Transverse colon (tissue), 4 donors: ENCODE measurements at regions of chr21 and their contacts with region 1.

Region 1: DNA sequence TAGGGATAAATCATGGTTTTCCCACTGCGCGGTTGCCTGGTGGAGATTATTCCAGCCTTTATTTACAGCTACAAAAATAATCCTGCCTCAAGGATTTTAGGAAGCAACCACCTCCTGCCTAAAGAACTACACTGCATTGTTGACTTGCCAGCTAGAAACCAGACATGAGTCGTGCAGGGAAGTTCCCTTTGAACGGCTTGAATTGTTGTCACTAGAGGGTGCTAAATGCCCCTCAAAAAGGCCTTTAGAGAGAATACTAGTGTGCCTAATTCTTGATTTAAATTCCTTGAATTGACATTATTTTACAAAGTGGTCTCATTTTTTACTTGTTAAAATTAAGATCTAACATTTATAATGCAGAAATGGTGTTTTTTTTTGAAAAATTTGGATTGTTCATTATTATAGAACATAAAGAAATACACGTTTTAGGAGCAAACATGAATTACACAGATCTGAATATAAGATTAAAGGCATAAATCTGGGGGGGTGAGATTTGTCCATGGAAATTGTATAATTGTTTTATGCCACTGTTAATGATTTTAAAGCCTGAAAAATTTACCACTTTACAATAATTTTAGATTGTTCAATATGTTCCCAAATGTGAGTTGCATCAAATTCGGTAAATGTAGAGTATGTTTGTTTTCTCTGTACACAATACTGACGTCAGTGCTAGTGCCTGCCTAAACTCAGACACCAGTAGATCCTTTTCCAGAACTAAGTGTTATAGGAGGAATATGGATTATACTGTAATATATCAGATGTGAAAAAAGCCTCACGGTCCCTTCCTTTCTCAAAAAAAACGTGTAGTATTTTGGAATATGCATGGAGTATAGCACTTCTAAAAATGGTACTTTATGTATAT is 7.6 kb upstream of the ERG start:
- DNase-seq: no peak
- H3K4me3 ChIP-seq: no peak overlapping the region
- H3K27ac ChIP-seq: peak overlapping the region in 3 of 4 donors; percentile 39 to 71 (median 53)
- H3K4me1 ChIP-seq: peaks cover 3 to 18% (median 17%) of the 10 kb centered on the region in 4 donors
- H3K27me3 ChIP-seq: no peaks in the 10 kb centered on the region
- CTCF ChIP-seq: peak; percentile 47 to 65 (median 62)
- EP300 ChIP-seq: no peak
- POLR2A ChIP-seq: no peak

Region 2: DNA sequence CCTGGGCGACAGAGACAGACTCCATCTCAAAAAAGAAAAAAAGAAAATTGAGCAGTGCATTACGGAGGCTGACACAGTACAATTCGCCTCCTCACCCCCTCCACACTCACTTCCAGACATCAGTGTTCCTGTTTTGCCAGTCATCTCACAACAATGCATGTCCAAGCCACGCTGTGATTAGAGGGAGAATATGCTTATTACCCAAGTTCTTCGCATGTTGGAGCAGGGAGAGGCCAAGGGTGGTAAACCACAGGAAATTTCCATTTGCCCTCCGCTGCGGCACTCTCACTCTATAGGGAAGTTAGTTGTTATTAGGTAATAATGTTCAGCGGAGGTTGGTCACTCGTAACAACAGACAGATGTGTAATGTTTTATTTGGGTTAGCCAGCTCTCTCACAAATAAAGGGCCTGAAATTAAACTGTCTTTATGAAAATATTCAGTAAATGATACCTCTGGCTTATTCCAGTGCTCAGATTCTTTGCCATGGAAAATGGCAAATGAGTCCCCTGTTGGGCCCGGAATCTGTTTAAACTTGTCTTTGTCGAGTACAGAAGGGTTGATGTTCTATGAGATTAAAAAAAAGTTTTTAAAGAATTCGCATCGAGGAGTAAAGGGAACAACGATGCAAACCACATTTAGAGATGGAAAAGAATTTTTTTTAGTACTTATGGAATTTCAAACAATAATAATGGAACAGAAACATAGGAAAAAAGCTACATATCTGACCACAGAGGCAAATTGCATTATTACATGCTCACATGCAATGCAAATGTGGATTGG is 216.0 kb before region 1 on chr21:
- in situ Hi-C with region 1: no loop called
- intact Hi-C with region 1: no loop called
- DNase-seq: peak; percentile 16
- H3K4me3 ChIP-seq: no peak overlapping the region
- H3K27ac ChIP-seq: no peak overlapping the region
- H3K4me1 ChIP-seq: peaks cover 0 to 15% (median 4%) of the 10 kb centered on the region in 4 donors
- H3K27me3 ChIP-seq: no peaks in the 10 kb centered on the region
- CTCF ChIP-seq: no peak
- EP300 ChIP-seq: no peak
- POLR2A ChIP-seq: no peak

Region 3: GRCh38 chr21:38570596-38570995 is 64.7 kb after region 1 on chr21:
- in situ Hi-C with region 1: no loop called
- intact Hi-C with region 1: loop called (anchors 2 kb)
- DNase-seq: no peak
- H3K4me3 ChIP-seq: no peak overlapping the region
- H3K27ac ChIP-seq: no peak overlapping the region
- H3K4me1 ChIP-seq: no peaks in the 10 kb centered on the region
- H3K27me3 ChIP-seq: peaks cover 6% of the 10 kb centered on the region
- CTCF ChIP-seq: no peak
- EP300 ChIP-seq: no peak
- POLR2A ChIP-seq: no peak

Region 4: GRCh38 chr21:38712071-38712470 is 206.2 kb after region 1 on chr21:
- in situ Hi-C with region 1: loop called in 3 of 4 experiments (anchors 10 to 25 kb)
- intact Hi-C with region 1: no loop called
- DNase-seq: peak; percentile 44
- H3K4me3 ChIP-seq: no peak overlapping the region
- H3K27ac ChIP-seq: no peak overlapping the region
- H3K4me1 ChIP-seq: no peaks in the 10 kb centered on the region
- H3K27me3 ChIP-seq: no peaks in the 10 kb centered on the region
- CTCF ChIP-seq: peak; percentile 29 to 58 (median 48)
- EP300 ChIP-seq: no peak
- POLR2A ChIP-seq: no peak

Region 5: DNA sequence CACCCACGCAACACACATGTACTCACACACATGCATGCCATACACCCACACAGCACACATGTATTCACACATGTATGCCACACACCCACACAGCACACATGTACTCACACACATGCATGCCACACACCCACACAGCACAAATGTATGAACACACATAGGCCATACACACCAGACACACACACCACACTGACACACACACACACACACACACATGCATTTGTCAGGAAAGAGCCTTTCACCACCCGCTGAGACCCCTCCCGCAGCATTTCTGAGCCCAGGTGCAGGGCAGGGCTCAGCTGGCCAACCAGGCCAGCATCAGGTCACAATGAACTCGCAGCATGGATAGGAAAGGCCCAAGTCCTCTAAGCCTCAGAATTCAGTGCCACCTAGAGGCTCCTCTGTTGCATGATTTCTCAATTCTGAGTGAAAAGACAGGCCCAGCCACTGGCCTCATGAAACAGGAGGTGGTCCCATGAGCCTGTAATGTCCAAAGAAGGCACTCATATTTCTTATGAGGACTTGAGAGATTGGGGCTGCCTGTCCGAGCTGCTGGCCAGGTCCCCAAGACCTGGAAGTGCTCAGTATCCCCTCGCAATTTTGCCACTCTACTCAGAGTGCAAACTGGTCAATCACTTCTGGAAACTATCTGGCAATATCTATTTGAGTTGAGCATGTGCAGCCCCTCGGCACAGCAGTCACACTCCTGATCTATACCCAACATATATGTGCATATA is 620.0 kb after region 1 on chr21:
- in situ Hi-C with region 1: loop called in 2 of 4 experiments (anchors 10 to 25 kb)
- intact Hi-C with region 1: no loop called
- DNase-seq: peak; percentile 51
- H3K4me3 ChIP-seq: no peak overlapping the region
- H3K27ac ChIP-seq: peak overlapping the region; percentile 32 to 57 (median 54)
- H3K4me1 ChIP-seq: peaks cover 0 to 14% (median 2%) of the 10 kb centered on the region in 4 donors
- H3K27me3 ChIP-seq: no peaks in the 10 kb centered on the region
- CTCF ChIP-seq: peak; percentile 56 to 76 (median 60)
- EP300 ChIP-seq: no peak
- POLR2A ChIP-seq: no peak

Region 6: GRCh38 chr21:39137248-39138178 is 631.6 kb after region 1 on chr21:
- in situ Hi-C with region 1: loop called (anchors 10 to 25 kb)
- intact Hi-C with region 1: no loop called
- DNase-seq: no peak
- H3K4me3 ChIP-seq: no peak overlapping the region
- H3K27ac ChIP-seq: no peak overlapping the region
- H3K4me1 ChIP-seq: peaks cover 0 to 6% (median 2%) of the 10 kb centered on the region in 4 donors
- H3K27me3 ChIP-seq: no peaks in the 10 kb centered on the region
- CTCF ChIP-seq: no peak
- EP300 ChIP-seq: no peak
- POLR2A ChIP-seq: no peak